PC-9 (cell line): ENCODE measurements at regions of chr10 and their contacts with region 1.

Region 1: GRCh38 chr10:69533658-69534057 is 39.6 kb downstream of the NEUROG3 start:
- DNase-seq: no peak
- H3K4me3 ChIP-seq: no peak overlapping the region
- H3K27ac ChIP-seq: no peak overlapping the region
- H3K4me1 ChIP-seq: no peaks in the 10 kb centered on the region
- H3K27me3 ChIP-seq: peaks cover 28% of the 10 kb centered on the region
- CTCF ChIP-seq: no peak

Region 2: GRCh38 chr10:69515699-69516259 is 17.9 kb before region 1 on chr10:
- CTCF ChIA-PET with region 1: interaction called, 3 read pairs
- POLR2A ChIA-PET with region 1: no interaction called
- intact Hi-C with region 1: loop called (anchors 2 kb)
- DNase-seq: peak; percentile 57 to 74
- H3K4me3 ChIP-seq: no peak overlapping the region
- H3K27ac ChIP-seq: no peak overlapping the region
- H3K4me1 ChIP-seq: no peaks in the 10 kb centered on the region
- H3K27me3 ChIP-seq: no peaks in the 10 kb centered on the region
- CTCF ChIP-seq: peak; percentile 95

Region 3: DNA sequence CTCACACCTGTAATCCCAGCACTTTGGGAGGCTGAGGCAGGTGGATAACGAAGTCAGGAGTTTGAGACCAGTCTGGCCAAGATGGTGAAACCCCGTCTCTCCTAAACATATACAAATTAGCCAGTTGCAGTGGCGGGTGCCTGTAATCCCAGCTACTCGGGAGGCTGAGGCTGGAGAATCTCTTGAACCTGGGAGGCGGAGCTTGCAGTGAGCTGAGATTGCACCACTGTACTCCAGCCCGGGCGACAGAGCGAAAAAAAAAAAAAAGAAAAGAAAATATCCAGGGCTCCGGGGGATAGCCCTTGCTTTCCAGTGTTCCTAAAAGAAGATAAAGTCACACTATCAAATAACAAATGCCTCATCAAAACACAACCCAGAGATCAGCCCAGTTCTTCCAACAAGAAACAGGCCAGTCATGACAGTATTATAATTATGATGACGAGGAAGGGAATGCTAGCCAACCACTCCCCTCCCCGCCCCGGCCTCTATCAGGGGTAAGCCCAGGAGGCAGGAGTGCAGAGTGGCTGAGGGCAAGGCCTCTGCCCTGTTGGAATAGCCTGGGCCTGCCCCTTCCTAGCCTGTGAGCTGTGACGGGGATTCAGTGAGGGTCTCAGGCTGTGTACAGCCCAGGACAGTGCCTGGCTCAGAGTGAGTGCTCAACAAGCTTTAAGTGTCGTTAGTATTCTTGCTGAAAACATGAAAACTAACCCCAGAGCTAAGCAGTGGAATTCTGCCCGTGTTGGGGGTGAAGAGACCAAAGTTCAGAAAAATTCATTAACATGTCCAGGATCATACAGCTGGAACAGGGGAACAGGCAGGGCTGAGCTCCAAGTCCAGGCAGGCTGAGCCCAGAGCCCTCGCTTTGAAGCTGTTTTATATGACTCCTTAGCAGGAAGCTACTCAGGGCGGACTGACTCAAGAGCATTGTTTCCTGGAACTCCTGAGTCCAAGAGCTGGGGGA is 150.6 kb after region 1 on chr10:
- CTCF ChIA-PET with region 1: no interaction called
- POLR2A ChIA-PET with region 1: no interaction called
- intact Hi-C with region 1: no loop called
- DNase-seq: peak in 1 of 2 experiments; percentile 38
- H3K4me3 ChIP-seq: no peak overlapping the region
- H3K27ac ChIP-seq: no peak overlapping the region
- H3K4me1 ChIP-seq: no peaks in the 10 kb centered on the region
- H3K27me3 ChIP-seq: peaks cover 95% of the 10 kb centered on the region
- CTCF ChIP-seq: no peak